ENCODE measurements at regions of chr13 and their contacts with region 1.

Region 1: GRCh38 chr13:30465585-30466357 is at the start of gene HMGB1:
- DNase-seq: peak; percentile 98
- ATAC-seq: peak; percentile 93
- H3K4me3 Mint-ChIP-seq: peak within 1 kb of the TSS; percentile 86
- H3K27ac Mint-ChIP-seq: peak within 1 kb of the TSS; percentile 98
- H3K4me1 Mint-ChIP-seq: peaks cover 19% of the 10 kb centered on the region
- H3K27me3 Mint-ChIP-seq: no peaks in the 10 kb centered on the region
- total RNA-seq, gene HMGB1: 764 to 851 TPM

Region 2: GRCh38 chr13:29454911-29455481 is 1010.8 kb before region 1 on chr13:
- CTCF ChIA-PET with region 1: no interaction called
- POLR2A ChIA-PET with region 1: no interaction called
- intact Hi-C with region 1: no loop called
- DNase-seq: peak; percentile 16
- ATAC-seq: peak; percentile 53
- H3K4me3 Mint-ChIP-seq: no peak overlapping the region
- H3K27ac Mint-ChIP-seq: no peak overlapping the region
- H3K4me1 Mint-ChIP-seq: no peaks in the 10 kb centered on the region
- H3K27me3 Mint-ChIP-seq: peaks cover 18% of the 10 kb centered on the region

Region 3: DNA sequence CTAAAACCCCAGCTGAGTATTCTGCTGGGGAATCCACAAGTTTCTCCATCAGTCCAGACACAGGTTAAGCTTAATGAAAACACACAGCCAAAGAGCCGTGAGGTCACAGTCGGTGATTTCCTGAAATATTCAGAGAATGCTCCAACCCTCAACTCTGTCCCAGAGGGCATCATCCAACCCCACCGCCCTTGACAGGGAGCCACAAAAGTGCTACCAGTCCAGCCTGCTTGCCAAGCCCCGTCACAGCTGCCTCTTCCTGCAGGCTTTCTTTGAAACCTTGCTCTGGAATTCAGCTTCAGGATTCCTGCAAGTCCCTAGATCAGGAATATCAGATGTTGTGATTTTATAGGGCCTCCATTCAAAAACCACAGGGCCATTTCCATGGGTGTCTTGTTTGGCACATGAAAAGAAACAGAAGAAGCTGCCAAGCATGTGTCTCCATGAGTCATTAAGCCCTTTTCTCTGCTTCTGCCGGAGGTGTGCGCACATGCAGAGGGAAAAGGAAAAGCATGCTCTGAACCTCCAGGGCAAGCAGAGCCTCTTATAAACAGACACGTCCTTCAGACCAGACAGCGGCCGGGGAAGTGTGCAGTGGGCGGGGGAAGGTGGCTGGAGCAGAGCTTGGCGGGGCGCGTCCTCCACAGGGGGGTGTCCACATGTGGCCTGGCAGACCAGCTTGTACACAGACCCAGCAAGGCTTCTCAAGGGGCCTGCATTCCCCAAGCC is 323.1 kb before region 1 on chr13:
- CTCF ChIA-PET with region 1: no interaction called
- POLR2A ChIA-PET with region 1: interaction called, 3 read pairs
- intact Hi-C with region 1: loop called in 1 of 2 experiments (anchors 5 kb)
- DNase-seq: peak; percentile 66
- ATAC-seq: peak; percentile 49
- H3K4me3 Mint-ChIP-seq: no peak overlapping the region
- H3K27ac Mint-ChIP-seq: peak overlapping the region; percentile 84
- H3K4me1 Mint-ChIP-seq: peaks cover 62% of the 10 kb centered on the region
- H3K27me3 Mint-ChIP-seq: no peaks in the 10 kb centered on the region

Region 4: GRCh38 chr13:30181888-30182651 is 283.7 kb before region 1 on chr13:
- CTCF ChIA-PET with region 1: no interaction called
- POLR2A ChIA-PET with region 1: no interaction called
- intact Hi-C with region 1: no loop called
- DNase-seq: no peak
- ATAC-seq: no peak
- H3K4me3 Mint-ChIP-seq: no peak overlapping the region
- H3K27ac Mint-ChIP-seq: no peak overlapping the region
- H3K4me1 Mint-ChIP-seq: peaks cover 4% of the 10 kb centered on the region
- H3K27me3 Mint-ChIP-seq: no peaks in the 10 kb centered on the region

Region 5: GRCh38 chr13:30196025-30196424 is 269.7 kb before region 1 on chr13:
- CTCF ChIA-PET with region 1: no interaction called
- POLR2A ChIA-PET with region 1: no interaction called
- intact Hi-C with region 1: no loop called
- DNase-seq: no peak
- ATAC-seq: no peak
- H3K4me3 Mint-ChIP-seq: no peak overlapping the region
- H3K27ac Mint-ChIP-seq: no peak overlapping the region
- H3K4me1 Mint-ChIP-seq: no peaks in the 10 kb centered on the region
- H3K27me3 Mint-ChIP-seq: no peaks in the 10 kb centered on the region

Region 6: DNA sequence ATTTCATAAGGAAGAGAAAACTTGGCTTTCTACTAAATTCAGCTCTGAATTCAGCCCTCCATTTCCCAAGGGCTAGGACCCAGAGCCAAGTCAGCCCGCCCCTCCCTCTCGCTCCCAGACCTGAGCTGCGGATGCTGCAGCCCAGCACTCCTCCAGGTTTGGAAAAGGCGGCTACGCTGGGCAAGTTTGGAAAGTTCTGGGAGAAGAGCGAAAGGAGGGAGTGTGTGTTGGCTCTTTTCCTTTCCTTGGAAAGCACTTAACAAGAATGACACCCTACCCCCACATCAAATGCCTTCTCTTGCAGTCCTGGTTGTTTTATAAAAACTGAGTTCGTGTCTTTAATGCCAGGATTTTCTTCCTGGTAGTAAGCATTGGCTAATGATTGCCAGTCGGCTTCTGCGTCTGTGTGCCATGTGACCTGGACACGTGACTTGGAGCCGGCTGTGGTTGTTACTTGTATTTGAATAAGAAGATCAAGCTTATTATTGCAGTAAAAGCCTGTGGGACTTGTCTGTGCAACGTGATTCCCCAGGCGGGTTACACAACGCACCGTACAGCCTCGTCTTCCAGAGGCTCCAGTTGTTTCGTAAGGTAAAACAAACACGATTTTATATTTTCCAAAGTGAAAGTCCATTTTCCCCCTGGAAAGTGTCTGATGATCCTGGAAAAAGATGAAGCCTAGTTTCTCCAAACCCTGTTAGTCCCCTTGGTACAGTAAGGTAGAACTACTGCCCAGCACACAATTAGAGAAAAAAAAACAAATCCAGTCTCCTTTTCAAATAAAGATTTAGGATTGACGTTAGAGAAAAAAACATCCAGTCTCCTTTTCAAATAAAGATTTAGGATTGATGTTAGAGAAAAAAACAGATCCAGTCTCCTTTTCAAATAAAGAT is 70.3 kb before region 1 on chr13:
- CTCF ChIA-PET with region 1: interaction called, 3 read pairs
- POLR2A ChIA-PET with region 1: no interaction called
- intact Hi-C with region 1: loop called in 1 of 2 experiments (anchors 1 kb)
- DNase-seq: peak; percentile 85
- ATAC-seq: peak; percentile 68
- H3K4me3 Mint-ChIP-seq: peak overlapping the region; percentile 82
- H3K27ac Mint-ChIP-seq: peak overlapping the region; percentile 96
- H3K4me1 Mint-ChIP-seq: peaks cover 26% of the 10 kb centered on the region
- H3K27me3 Mint-ChIP-seq: no peaks in the 10 kb centered on the region

Region 7: DNA sequence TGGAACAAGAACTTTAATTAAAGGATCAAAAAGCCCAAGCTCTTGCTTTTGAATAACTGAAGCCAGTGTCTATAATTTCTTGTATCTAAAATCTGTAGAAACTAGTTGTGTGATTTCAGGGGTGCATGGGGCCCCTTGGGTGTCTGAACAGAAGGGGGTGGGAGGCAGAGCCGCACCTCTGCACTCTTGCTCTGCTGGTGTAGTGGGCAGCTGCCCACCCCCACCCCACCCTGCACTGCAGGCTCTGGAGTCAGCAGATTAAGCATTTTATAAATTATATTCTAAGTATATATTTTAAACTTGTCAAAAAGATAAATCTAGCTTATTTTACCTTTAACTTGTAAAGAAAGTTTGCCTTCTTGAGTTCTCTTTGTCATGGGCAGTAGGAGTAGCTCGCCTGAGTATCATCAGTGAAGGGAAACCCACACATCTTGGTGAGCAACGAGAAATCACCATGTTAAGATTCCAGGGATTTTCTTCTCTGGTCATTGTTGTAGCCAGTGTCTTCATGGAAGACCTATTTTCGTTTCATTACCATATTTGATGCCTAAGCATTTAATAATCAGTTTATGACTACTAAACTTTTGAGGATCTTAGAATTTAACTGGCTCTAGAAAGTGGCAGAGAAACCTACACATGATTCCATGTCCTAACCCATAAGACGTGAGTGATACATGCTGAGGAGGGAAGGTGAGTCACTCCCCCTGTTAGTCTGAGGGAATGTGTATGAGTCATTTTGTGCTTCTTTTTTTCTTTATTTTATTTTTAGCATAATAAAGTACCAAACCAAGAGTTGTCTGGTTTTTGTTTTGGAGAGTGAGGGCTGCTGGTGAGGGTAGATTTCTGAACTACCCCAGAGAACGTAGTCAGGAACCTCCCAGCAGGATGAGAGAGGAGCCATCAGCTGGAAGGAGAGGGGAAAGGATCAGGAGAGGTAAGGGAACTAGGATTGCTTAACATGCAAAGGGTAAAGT is 35.8 kb before region 1 on chr13:
- CTCF ChIA-PET with region 1: no interaction called
- POLR2A ChIA-PET with region 1: no interaction called
- intact Hi-C with region 1: loop called (anchors 1 to 2 kb)
- DNase-seq: peak; percentile 50
- ATAC-seq: peak; percentile 99
- H3K4me3 Mint-ChIP-seq: peak overlapping the region; percentile 37
- H3K27ac Mint-ChIP-seq: peak overlapping the region; percentile 93
- H3K4me1 Mint-ChIP-seq: peaks cover 30% of the 10 kb centered on the region
- H3K27me3 Mint-ChIP-seq: no peaks in the 10 kb centered on the region

Region 8: DNA sequence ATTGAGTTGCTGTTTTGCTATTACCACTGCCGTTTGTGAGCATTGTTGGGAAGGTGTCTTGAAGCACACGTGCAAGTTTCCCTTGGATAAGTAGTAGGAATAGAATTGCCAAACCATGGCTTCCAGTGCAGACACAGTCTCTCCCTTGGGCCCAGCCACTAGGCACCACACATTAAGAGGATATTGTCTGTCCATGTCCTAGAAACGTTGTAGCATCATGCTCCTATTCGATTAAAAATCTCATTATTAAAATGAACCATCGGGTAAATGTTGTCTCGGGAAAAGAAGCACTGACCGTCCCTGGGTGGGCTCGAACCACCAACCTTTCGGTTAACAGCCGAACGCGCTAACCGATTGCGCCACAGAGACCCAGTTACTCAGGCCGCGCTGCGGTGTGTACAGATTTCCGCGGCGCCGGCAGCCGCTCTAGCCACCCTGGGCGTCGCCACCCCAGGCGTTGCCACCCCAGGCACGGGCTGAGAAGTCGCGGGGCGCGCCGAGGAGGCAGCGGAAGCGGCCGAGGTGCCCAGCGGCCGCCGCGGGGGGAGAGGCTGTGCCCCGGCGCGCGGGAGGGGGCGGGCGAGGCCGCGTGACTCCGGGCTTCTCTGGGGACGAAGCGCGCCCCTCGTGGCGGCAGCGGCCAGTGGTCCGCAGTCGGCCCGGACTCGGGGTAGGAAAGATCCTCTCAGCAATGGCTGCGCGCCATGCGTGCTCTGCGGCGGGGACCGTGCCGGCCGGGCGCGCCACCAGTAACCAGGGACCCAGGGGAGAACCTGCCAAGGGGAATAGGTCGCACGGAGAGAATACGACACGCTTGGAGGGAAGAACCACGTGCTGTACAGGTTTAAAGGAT is 208.1 kb after region 1 on chr13:
- CTCF ChIA-PET with region 1: no interaction called
- POLR2A ChIA-PET with region 1: no interaction called
- intact Hi-C with region 1: loop called in 1 of 2 experiments (anchors 1 kb)
- DNase-seq: peak; percentile 92
- ATAC-seq: peak; percentile 97
- H3K4me3 Mint-ChIP-seq: peak overlapping the region; percentile 72
- H3K27ac Mint-ChIP-seq: peak overlapping the region; percentile 73
- H3K4me1 Mint-ChIP-seq: peaks cover 12% of the 10 kb centered on the region
- H3K27me3 Mint-ChIP-seq: no peaks in the 10 kb centered on the region

Region 9: DNA sequence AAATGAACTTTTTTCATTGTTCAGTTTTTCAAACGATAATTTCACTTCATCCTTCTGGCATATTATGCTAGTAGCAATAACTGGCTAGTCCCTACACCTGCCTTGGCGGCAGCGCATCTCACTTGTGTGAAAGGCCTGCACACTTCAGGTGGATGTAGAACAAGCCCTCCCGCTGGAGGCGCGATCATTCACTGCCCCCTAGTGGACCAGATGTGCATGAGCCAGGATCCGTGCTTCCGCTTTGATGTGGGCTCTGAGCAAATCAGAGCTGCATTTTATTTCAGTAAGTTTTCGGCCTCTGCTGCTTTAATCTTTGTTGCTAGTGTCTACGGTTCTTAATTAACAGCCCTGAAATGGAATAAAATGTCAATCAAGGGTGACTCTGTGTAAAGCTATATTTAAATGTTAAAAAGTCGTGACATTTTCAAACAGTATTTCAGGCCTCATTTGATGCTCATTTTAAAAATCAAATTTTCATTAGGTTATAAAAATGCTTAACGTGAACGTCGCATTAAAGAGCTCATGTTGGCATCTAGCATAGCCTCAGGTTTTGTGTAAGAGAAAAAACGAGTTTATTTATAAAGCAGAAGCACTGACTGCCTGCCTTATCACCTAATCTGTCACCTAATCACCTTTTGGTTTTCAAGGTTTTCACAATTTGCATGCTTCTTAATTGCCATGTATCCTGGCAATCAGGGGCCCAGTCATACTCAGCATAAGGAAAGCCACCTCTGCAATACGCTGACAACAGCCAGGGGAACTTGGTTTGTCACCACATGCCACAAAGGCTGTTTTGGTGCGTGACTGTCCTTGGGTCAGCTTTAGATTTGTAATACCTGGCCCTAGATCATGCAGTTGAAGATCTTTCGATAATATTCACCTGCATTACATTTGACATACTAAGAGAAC is 578.9 kb after region 1 on chr13:
- CTCF ChIA-PET with region 1: no interaction called
- POLR2A ChIA-PET with region 1: no interaction called
- intact Hi-C with region 1: loop called in 1 of 2 experiments (anchors 2 kb)
- DNase-seq: peak; percentile 91
- ATAC-seq: peak; percentile 69
- H3K4me3 Mint-ChIP-seq: peak overlapping the region; percentile 28
- H3K27ac Mint-ChIP-seq: peak overlapping the region; percentile 89
- H3K4me1 Mint-ChIP-seq: peaks cover 46% of the 10 kb centered on the region
- H3K27me3 Mint-ChIP-seq: peaks cover 6% of the 10 kb centered on the region